Activated B cell treated with CpG ODN at 0.5 μM for 24 hours (primary cell): ENCODE measurements at regions of chr7 and their contacts with region 1.

Region 1: DNA sequence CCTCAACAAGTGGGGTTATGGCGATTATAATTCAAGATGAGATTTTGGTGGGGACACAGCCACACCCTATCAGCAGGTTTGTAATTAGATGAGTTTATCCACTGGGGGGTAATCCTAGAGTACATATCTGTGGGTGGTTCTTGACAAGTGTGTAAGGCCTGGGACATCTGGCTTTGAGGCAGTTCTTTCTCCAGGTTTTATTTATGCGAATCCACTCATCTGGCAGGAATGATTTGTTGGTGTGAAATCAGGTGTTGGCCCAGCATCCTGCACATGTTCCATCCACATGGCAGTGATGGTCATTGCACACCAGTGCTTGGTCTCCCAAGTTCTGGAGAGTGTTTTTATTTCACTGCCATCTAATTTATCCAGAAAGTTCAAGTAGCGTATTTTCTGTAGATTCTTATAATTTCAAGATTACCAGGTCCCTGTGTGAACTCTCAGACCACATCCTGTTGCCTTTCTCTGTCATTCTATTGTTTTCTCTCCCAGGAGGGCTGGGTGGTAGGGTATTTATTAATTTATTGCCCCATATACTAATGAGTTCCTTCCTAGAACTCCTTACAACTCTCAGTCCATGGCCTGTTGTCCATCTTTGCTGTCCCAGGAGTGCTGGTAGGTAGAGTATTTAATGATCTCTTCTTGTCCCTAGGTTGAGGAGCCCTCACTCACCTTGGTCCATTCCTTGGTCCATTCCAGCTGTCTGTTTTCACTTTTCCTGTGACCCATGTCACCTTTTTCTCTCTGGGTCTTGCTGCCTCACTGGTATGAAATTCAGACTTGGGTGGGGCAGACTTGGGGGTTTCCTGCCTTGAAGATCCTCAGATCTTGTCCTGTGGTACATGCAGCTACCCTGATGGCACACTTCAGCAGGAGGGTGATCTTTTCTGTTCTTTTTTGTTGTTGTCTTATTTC is 10.4 kb downstream of the RALA start:
- DNase-seq: no peak
- ATAC-seq: no peak
- H3K4me3 Mint-ChIP-seq: peak overlapping the region; percentile 17
- H3K27ac Mint-ChIP-seq: no peak overlapping the region
- H3K4me1 Mint-ChIP-seq: peaks cover 40% of the 10 kb centered on the region
- H3K27me3 Mint-ChIP-seq: no peaks in the 10 kb centered on the region
- CTCF ChIP-seq: no peak

Region 2: GRCh38 chr7:38262545-38262944 is 1371.3 kb before region 1 on chr7:
- CTCF ChIA-PET with region 1: no interaction called
- POLR2A ChIA-PET with region 1: no interaction called
- intact Hi-C with region 1: no loop called
- DNase-seq: no peak
- ATAC-seq: no peak
- H3K4me3 Mint-ChIP-seq: no peak overlapping the region
- H3K27ac Mint-ChIP-seq: no peak overlapping the region
- H3K4me1 Mint-ChIP-seq: no peaks in the 10 kb centered on the region
- H3K27me3 Mint-ChIP-seq: peaks cover 6% of the 10 kb centered on the region
- CTCF ChIP-seq: no peak

Region 3: GRCh38 chr7:39647816-39648215 is 14.0 kb after region 1 on chr7:
- CTCF ChIA-PET with region 1: no interaction called
- POLR2A ChIA-PET with region 1: no interaction called
- intact Hi-C with region 1: loop called (anchors 2 kb)
- DNase-seq: no peak
- ATAC-seq: no peak
- H3K4me3 Mint-ChIP-seq: no peak overlapping the region
- H3K27ac Mint-ChIP-seq: no peak overlapping the region
- H3K4me1 Mint-ChIP-seq: peaks cover 23% of the 10 kb centered on the region
- H3K27me3 Mint-ChIP-seq: no peaks in the 10 kb centered on the region
- CTCF ChIP-seq: no peak

Region 4: DNA sequence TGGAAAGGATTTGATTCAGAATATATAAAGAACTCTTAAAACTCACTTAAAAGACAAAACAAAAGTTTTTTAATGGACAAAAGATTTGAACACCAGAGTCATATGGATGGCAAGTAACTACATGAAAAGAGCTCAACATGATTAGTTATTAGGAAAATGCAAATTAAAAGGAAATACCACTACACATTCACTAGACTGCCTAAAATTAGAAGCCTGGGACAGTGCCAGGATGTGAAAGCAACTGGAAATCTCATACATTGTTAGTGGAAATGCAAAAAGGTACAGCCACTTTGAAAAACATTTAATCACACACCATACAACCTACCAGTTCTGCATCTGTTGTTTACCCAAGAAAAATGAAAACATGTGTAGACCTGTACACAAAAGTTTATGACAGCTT is 38.4 kb after region 1 on chr7:
- CTCF ChIA-PET with region 1: no interaction called
- POLR2A ChIA-PET with region 1: no interaction called
- intact Hi-C with region 1: loop called (anchors 5 kb)
- DNase-seq: no peak
- ATAC-seq: no peak
- H3K4me3 Mint-ChIP-seq: no peak overlapping the region
- H3K27ac Mint-ChIP-seq: no peak overlapping the region
- H3K4me1 Mint-ChIP-seq: peaks cover 19% of the 10 kb centered on the region
- H3K27me3 Mint-ChIP-seq: no peaks in the 10 kb centered on the region
- CTCF ChIP-seq: no peak